Activated CD4-positive, alpha-beta memory T cell treated with anti-CD3 and anti-CD28 coated beads, Interleukin-2, amount 10 ng/mL, durations not matched to agents 7 days and 5 days (primary cell): ENCODE measurements at regions of chr10 and their contacts with region 1.

Region 1: DNA sequence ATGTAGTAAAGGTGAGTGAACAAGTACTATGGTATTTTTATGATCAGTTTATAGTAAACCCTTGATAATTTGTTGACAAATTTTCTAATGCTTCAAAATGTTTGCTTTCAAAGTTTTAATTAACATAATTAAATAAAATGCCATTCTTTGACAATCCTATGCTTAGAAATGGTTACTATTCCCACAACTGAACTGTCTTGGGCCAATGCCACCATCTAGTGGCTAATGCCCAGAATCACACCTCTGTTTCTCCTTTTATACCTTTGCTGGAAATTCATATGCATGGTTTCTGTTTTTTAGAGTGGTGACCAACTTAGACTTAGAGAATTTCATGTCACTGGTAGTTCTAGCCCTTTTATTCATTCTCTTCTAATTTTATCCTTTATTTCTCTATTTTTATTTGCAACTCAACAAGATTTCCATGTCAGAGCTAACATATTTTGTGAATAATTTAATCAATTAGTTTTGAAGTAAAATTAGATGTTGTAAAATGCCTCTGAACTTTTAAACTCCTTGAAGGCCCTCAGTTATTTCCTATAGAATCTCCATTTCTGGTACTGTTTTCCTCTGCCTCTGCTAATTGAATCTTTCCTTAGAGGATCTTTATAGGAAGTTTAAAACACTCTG is 31.1 kb downstream of the PCGF5 start:
- DNase-seq: peak; percentile 58
- H3K4me3 Mint-ChIP-seq: no peak overlapping the region
- H3K27ac Mint-ChIP-seq: no peak overlapping the region
- H3K4me1 Mint-ChIP-seq: peaks cover 5% of the 10 kb centered on the region
- H3K27me3 Mint-ChIP-seq: no peaks in the 10 kb centered on the region

Region 2: GRCh38 chr10:90912174-90912573 is 339.4 kb before region 1 on chr10:
- CTCF ChIA-PET with region 1: interaction called, 35 read pairs
- POLR2A ChIA-PET with region 1: interaction called, 6 read pairs
- DNase-seq: no peak
- H3K4me3 Mint-ChIP-seq: no peak overlapping the region
- H3K27ac Mint-ChIP-seq: no peak overlapping the region
- H3K4me1 Mint-ChIP-seq: peaks cover 2% of the 10 kb centered on the region
- H3K27me3 Mint-ChIP-seq: peaks cover 2% of the 10 kb centered on the region

Region 3: DNA sequence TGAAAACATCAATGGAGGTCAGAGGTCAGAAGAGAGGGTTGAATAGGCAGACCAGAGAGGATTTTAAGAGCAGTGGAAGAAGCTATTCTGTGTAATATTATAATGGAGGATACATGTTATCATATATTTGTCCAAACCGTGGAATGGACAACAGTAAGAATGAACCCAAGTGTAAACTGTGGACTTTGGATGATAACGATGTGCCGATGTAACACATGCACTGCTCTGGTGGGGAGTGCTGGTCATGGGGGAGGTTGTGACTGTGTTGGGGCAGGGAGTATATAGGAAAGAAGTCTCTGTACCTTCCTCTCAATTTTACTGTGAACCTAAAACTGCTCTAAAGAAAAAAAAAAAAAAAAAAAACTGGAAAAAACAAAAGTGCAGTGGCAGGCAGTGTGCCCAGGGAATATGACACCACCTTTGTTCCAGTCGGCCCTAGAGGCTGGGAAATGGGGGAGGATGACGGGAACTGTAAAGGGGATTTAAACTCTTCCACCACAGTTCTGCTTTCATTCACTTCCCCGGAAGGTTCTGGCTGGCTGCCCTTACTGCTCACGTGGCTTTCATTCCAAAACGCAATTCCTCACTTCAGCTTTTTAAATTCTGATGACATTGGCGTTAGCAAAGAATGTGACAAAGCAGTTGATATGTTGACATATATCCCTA is 216.9 kb before region 1 on chr10:
- CTCF ChIA-PET with region 1: interaction called, 11 read pairs
- POLR2A ChIA-PET with region 1: no interaction called
- DNase-seq: no peak
- H3K4me3 Mint-ChIP-seq: no peak overlapping the region
- H3K27ac Mint-ChIP-seq: peak overlapping the region; percentile 81
- H3K4me1 Mint-ChIP-seq: peaks cover 20% of the 10 kb centered on the region
- H3K27me3 Mint-ChIP-seq: peaks cover 2% of the 10 kb centered on the region

Region 4: GRCh38 chr10:91043173-91043910 is 208.2 kb before region 1 on chr10:
- CTCF ChIA-PET with region 1: interaction called, 10 read pairs
- POLR2A ChIA-PET with region 1: no interaction called
- DNase-seq: no peak
- H3K4me3 Mint-ChIP-seq: no peak overlapping the region
- H3K27ac Mint-ChIP-seq: no peak overlapping the region
- H3K4me1 Mint-ChIP-seq: peaks cover under 1% of the 10 kb centered on the region
- H3K27me3 Mint-ChIP-seq: peaks cover 26% of the 10 kb centered on the region

Region 5: GRCh38 chr10:91088300-91089140 is 163.0 kb before region 1 on chr10:
- CTCF ChIA-PET with region 1: interaction called, 67 read pairs
- POLR2A ChIA-PET with region 1: interaction called, 4 read pairs
- DNase-seq: no peak
- H3K4me3 Mint-ChIP-seq: no peak overlapping the region
- H3K27ac Mint-ChIP-seq: no peak overlapping the region
- H3K4me1 Mint-ChIP-seq: peaks cover 2% of the 10 kb centered on the region
- H3K27me3 Mint-ChIP-seq: no peaks in the 10 kb centered on the region

Region 6: DNA sequence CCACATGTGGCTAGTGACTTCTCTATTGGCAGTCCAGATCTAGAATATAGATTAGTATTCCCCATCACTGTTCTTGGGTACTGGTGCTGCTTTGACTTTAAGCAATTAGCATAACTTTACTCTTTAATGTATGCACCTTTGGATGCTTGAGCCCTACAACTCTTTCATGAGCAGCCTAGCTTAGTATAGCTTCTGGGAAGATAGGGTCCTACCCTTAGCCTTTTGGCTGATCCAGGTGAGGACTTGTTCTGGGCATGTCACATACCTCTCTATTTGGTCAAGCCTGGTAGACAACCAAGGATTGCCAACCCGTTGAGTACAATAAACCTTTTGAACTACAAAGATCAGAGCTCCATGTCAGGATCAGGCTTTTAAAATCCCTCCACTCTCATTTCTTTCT is 13.4 kb before region 1 on chr10:
- CTCF ChIA-PET with region 1: interaction called, 17 read pairs
- POLR2A ChIA-PET with region 1: interaction called, 3 read pairs
- DNase-seq: no peak
- H3K4me3 Mint-ChIP-seq: no peak overlapping the region
- H3K27ac Mint-ChIP-seq: no peak overlapping the region
- H3K4me1 Mint-ChIP-seq: peaks cover 12% of the 10 kb centered on the region
- H3K27me3 Mint-ChIP-seq: no peaks in the 10 kb centered on the region

Region 7: GRCh38 chr10:91316486-91316885 is 64.9 kb after region 1 on chr10:
- CTCF ChIA-PET with region 1: no interaction called
- POLR2A ChIA-PET with region 1: no interaction called
- DNase-seq: no peak
- H3K4me3 Mint-ChIP-seq: no peak overlapping the region
- H3K27ac Mint-ChIP-seq: no peak overlapping the region
- H3K4me1 Mint-ChIP-seq: peaks cover 5% of the 10 kb centered on the region
- H3K27me3 Mint-ChIP-seq: peaks cover 2% of the 10 kb centered on the region

Region 8: DNA sequence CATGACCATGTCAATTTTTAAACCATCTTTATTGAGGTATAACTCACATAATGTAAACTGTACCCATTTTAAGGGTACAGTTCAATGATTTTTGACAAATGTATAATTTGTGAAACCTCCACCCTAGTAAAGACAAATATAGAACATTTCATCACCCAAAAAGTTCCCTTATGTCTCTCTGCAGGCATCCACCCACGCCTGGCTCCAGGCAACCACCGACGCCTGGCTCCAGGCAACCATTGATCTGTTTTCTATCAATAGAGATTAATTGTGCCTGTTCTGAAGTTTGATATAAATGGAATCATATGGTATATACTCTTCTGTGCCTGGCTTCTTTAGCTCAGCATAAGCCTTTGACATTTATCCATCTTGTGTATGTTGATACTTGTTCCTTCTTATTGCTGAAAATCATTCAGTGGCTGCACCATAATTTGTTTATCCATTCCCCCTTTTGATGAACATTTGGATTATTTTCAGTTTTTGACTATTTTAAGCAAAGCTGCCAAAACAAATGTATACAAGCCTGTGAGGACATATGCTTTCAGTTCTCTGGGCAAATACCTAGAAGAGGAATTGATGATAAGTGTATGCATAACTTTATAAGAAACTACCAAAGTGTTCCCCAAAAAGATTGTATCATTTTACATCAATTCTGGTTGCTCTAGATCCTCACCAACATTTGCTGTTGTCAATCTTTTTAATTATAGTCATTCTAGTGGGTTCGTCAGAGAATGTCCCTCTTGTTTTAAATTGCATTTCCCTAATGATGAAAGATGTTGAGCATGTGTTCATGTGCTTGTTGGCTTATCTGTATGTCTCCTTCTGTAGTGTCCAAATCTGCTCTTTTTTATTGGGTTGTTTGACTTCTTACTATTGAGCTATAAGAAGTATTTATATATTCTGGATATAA is 102.9 kb after region 1 on chr10:
- CTCF ChIA-PET with region 1: no interaction called
- POLR2A ChIA-PET with region 1: no interaction called
- DNase-seq: no peak
- H3K4me3 Mint-ChIP-seq: no peak overlapping the region
- H3K27ac Mint-ChIP-seq: no peak overlapping the region
- H3K4me1 Mint-ChIP-seq: no peaks in the 10 kb centered on the region
- H3K27me3 Mint-ChIP-seq: peaks cover 15% of the 10 kb centered on the region

Region 9: DNA sequence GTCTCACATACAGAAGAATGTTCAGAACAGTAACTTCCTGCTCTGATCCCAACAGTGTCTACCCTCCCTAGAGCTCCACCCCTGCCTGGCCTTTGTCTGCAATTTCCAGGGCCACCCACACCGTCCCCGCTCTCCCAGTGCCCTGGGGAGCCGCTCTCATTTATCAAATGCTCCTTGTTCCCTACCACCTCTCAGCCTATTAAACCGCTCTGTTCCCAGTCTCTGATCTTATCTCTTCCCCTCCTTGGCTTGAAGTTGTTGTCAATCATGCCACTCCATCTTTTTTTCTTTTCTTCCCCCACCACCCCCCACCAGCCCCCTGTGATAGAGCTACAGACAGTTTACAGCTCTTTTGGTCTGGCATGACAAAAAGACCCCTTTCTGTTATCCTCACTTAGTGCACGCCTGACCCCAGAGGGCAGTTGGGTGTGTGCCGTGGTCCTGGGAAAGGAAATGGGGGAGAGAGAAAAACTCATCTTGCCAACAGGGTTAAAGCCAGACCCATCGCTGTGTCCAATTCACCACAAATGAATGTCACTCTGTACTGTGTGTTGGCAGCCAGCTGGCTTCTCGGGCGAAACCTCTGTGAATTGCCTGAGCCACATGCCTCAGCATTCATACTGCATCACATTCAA is 129.8 kb after region 1 on chr10:
- CTCF ChIA-PET with region 1: no interaction called
- POLR2A ChIA-PET with region 1: no interaction called
- DNase-seq: no peak
- H3K4me3 Mint-ChIP-seq: no peak overlapping the region
- H3K27ac Mint-ChIP-seq: no peak overlapping the region
- H3K4me1 Mint-ChIP-seq: peaks cover 4% of the 10 kb centered on the region
- H3K27me3 Mint-ChIP-seq: peaks cover 25% of the 10 kb centered on the region

Region 10: DNA sequence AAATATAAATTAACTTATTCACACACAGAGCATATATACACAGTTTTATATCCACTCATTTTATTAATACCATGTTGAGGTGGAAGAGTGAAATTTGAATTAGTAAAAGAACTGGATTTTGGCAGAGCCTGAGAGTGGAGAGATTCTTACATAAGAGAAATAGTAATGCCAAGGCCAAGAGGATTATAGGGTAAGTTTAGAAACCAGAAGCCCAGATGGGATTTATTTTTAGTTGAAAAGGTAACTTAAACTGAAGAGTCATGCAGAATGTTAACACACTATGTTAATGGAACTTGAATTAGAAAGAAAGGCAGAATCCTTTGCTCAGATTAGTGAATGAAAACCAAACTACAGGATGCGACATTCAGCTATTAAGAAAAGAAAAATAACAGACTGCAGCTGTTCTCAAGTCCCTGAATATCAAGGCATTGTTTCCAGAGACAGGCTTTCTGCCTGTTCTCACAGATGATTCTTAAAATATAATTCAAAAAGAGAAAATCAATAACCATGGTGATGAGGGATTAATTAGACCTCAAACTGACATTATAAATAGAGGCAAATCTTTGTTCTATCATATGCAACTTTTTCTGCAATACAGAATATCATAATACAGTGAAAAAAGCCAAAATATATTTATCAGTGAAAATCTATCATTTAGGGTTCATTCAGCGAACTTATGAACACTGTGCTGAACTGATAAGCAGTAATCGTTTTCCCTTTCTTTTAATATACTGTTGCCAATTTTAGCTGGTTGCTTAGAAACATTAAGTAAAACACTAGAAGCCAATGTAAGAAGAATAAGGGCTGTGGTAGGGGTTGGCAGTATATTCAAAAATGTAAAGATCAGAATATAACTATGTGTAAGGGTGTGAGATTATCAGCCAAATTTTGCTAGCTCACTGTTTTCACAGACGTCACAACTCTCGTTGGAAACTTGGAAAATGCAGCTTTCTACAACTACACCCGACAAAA is 193.0 kb after region 1 on chr10:
- CTCF ChIA-PET with region 1: no interaction called
- POLR2A ChIA-PET with region 1: no interaction called
- DNase-seq: no peak
- H3K4me3 Mint-ChIP-seq: no peak overlapping the region
- H3K27ac Mint-ChIP-seq: no peak overlapping the region
- H3K4me1 Mint-ChIP-seq: no peaks in the 10 kb centered on the region
- H3K27me3 Mint-ChIP-seq: no peaks in the 10 kb centered on the region